ENCODE measurements at regions of chrX and their contacts with region 1.

Region 1: GRCh38 chrX:46408553-46409407 is 136.4 kb downstream of the ZNF674 start:
- DNase-seq: peak; percentile 16
- ATAC-seq: peak; percentile 74
- H3K4me3 ChIP-seq: no peak overlapping the region
- H3K27ac ChIP-seq: no peak overlapping the region
- H3K4me1 ChIP-seq: no peaks in the 10 kb centered on the region
- H3K27me3 ChIP-seq: no peaks in the 10 kb centered on the region; a peak in 1 of 4 replicates
- CTCF ChIP-seq: peak; percentile 85 to 86 (median 85)
- EP300 ChIP-seq: no peak
- POLR2A ChIP-seq: no peak
- RAD21 ChIP-seq: peak; percentile 86

Region 2: GRCh38 chrX:46376246-46376885 is 32.4 kb before region 1 on chrX:
- CTCF ChIA-PET with region 1: interaction called, 26 read pairs
- POLR2A ChIA-PET with region 1: no interaction called
- RAD21 ChIA-PET with region 1: interaction called, 5 read pairs
- SMC1A ChIA-PET with region 1: interaction called, 15 read pairs
- in situ Hi-C with region 1: no loop called
- intact Hi-C with region 1: loop called (anchors 2 kb)
- DNase-seq: no peak
- ATAC-seq: peak; percentile 69
- H3K4me3 ChIP-seq: no peak overlapping the region
- H3K27ac ChIP-seq: no peak overlapping the region
- H3K4me1 ChIP-seq: no peaks in the 10 kb centered on the region
- H3K27me3 ChIP-seq: no peaks in the 10 kb centered on the region
- CTCF ChIP-seq: peak in 2 of 3 experiments; percentile 13 to 45; a peak in 2 of 6 replicates
- EP300 ChIP-seq: no peak
- POLR2A ChIP-seq: no peak
- RAD21 ChIP-seq: peak; percentile 42

Region 3: GRCh38 chrX:46381630-46382029 is 27.1 kb before region 1 on chrX:
- CTCF ChIA-PET with region 1: interaction called, 26 read pairs
- POLR2A ChIA-PET with region 1: no interaction called
- RAD21 ChIA-PET with region 1: interaction called, 5 read pairs
- SMC1A ChIA-PET with region 1: interaction called, 15 read pairs
- in situ Hi-C with region 1: no loop called
- intact Hi-C with region 1: loop called (anchors 2 kb)
- DNase-seq: peak; percentile 4
- ATAC-seq: peak; percentile 85
- H3K4me3 ChIP-seq: no peak overlapping the region
- H3K27ac ChIP-seq: no peak overlapping the region
- H3K4me1 ChIP-seq: no peaks in the 10 kb centered on the region
- H3K27me3 ChIP-seq: no peaks in the 10 kb centered on the region
- CTCF ChIP-seq: peak; percentile 60 to 71 (median 65)
- EP300 ChIP-seq: no peak
- POLR2A ChIP-seq: no peak
- RAD21 ChIP-seq: peak; percentile 64

Region 4: DNA sequence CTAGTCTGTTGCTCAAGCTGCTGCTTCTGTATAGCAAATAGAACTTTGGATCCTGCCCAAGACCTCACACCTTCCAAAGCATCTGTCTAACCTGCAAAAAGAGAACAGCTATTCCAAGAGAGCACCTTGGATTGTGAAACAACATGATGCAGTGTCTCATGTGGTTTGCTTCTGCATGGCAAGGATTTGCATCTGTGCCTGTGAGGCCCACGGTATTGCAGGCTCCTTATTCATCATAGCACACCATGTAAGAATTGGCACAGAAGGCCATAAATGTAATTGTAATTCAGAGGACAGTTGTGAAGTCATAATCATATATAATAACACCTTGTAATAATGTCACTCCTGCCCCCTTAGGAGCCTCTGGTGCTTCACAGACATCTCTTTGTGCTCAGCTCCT is 10.7 kb before region 1 on chrX:
- CTCF ChIA-PET with region 1: interaction called, 16 read pairs
- POLR2A ChIA-PET with region 1: no interaction called
- RAD21 ChIA-PET with region 1: interaction called, 3 read pairs
- SMC1A ChIA-PET with region 1: interaction called, 10 read pairs
- in situ Hi-C with region 1: no loop called
- intact Hi-C with region 1: no loop called
- DNase-seq: no peak
- ATAC-seq: no peak
- H3K4me3 ChIP-seq: no peak overlapping the region
- H3K27ac ChIP-seq: no peak overlapping the region
- H3K4me1 ChIP-seq: no peaks in the 10 kb centered on the region
- H3K27me3 ChIP-seq: no peaks in the 10 kb centered on the region
- CTCF ChIP-seq: no peak
- EP300 ChIP-seq: no peak
- POLR2A ChIP-seq: no peak
- RAD21 ChIP-seq: no peak